ENCODE measurements at regions of chr19 and their contacts with region 1.

Region 1: GRCh38 chr19:13262450-13262849 is 112.2 kb downstream of the IER2 start:
- DNase-seq: no peak
- H3K4me3 ChIP-seq: no peak overlapping the region
- H3K27ac ChIP-seq: no peak overlapping the region
- H3K4me1 ChIP-seq: no peaks in the 10 kb centered on the region
- H3K27me3 ChIP-seq: no peaks in the 10 kb centered on the region
- CTCF ChIP-seq: peak; percentile 49

Region 2: GRCh38 chr19:12974301-12975220 is 287.9 kb before region 1 on chr19:
- intact Hi-C with region 1: loop called (anchors 5 kb)
- DNase-seq: no peak
- H3K4me3 ChIP-seq: no peak overlapping the region
- H3K27ac ChIP-seq: no peak overlapping the region
- H3K4me1 ChIP-seq: no peaks in the 10 kb centered on the region
- H3K27me3 ChIP-seq: no peaks in the 10 kb centered on the region
- CTCF ChIP-seq: no peak

Region 3: DNA sequence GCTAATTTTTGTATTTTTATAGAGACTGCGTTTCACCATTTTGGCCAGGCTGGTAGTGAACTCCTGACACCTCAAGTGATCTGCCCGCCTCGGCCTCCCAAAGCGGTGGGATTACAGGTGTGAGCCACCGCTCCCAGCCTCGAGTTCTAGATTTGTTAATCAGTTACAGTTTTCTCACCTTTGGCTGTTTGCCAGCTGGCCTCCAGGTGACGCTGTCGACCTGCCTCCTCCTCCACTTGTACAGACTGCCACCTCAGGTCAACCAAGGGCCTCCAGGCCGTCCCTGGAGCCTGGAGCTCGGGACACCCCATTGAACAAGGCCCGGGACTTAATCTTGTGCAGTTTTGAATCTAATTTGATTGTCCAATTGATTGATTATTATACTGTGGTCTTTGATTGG is 66.8 kb before region 1 on chr19:
- intact Hi-C with region 1: loop called (anchors 5 kb)
- DNase-seq: peak; percentile 80
- H3K4me3 ChIP-seq: no peak overlapping the region
- H3K27ac ChIP-seq: no peak overlapping the region
- H3K4me1 ChIP-seq: peaks cover 7% of the 10 kb centered on the region
- H3K27me3 ChIP-seq: no peaks in the 10 kb centered on the region
- CTCF ChIP-seq: peak; percentile 11

Region 4: DNA sequence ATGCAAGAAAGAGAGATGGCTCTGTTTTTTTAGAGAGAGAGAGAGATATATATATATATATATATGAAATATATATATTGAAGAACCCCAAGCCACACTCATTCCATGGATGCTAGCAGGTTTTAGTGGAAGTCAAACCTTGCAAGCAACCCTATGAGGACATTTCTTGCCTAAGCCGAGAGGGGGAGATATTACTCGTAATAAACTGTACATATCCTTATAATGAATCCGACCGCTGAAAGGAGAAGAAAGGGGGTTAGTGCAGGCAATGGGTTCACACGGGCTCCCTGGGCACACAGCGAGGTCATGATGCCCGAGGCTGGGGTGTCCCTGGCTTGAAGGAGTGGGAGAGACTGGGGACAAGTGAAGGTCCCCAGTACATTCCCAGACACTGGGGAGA is 33.9 kb before region 1 on chr19:
- intact Hi-C with region 1: no loop called
- DNase-seq: no peak
- H3K4me3 ChIP-seq: no peak overlapping the region
- H3K27ac ChIP-seq: no peak overlapping the region
- H3K4me1 ChIP-seq: no peaks in the 10 kb centered on the region
- H3K27me3 ChIP-seq: no peaks in the 10 kb centered on the region
- CTCF ChIP-seq: no peak

Measured in colonic mucosa (tissue), 4 donors.